Motor neuron (in vitro differentiated cells): ENCODE measurements at regions of chr10 and their contacts with region 1.

Region 1: GRCh38 chr10:111360260-111360925 is 283.6 kb downstream of the ADRA2A start:
- ATAC-seq: peak; percentile 76 to 100 (median 88)
- H3K4me3 ChIP-seq: no peak overlapping the region
- H3K27ac ChIP-seq: no peak overlapping the region
- H3K4me1 ChIP-seq: no peaks in the 10 kb centered on the region

Region 2: GRCh38 chr10:111598436-111599059 is 238.2 kb after region 1 on chr10:
- in situ Hi-C with region 1: loop called in 1 of 9 experiments (anchors 10 kb)
- ATAC-seq: peak; percentile 47 to 98 (median 84)
- H3K4me3 ChIP-seq: no peak overlapping the region
- H3K27ac ChIP-seq: no peak overlapping the region
- H3K4me1 ChIP-seq: peaks cover 9 to 17% of the 10 kb centered on the region in 2 donors